ENCODE measurements at regions of chr10 and their contacts with region 1.

Region 1: GRCh38 chr10:70404036-70404786 is at the start of gene EIF4EBP2:
- DNase-seq: peak; percentile 99
- H3K4me3 Mint-ChIP-seq: peak within 1 kb of the TSS; percentile 99
- H3K27ac Mint-ChIP-seq: peak within 1 kb of the TSS; percentile 96
- H3K4me1 Mint-ChIP-seq: peaks cover 35% of the 10 kb centered on the region
- H3K27me3 Mint-ChIP-seq: peaks cover 4% of the 10 kb centered on the region

Region 2: DNA sequence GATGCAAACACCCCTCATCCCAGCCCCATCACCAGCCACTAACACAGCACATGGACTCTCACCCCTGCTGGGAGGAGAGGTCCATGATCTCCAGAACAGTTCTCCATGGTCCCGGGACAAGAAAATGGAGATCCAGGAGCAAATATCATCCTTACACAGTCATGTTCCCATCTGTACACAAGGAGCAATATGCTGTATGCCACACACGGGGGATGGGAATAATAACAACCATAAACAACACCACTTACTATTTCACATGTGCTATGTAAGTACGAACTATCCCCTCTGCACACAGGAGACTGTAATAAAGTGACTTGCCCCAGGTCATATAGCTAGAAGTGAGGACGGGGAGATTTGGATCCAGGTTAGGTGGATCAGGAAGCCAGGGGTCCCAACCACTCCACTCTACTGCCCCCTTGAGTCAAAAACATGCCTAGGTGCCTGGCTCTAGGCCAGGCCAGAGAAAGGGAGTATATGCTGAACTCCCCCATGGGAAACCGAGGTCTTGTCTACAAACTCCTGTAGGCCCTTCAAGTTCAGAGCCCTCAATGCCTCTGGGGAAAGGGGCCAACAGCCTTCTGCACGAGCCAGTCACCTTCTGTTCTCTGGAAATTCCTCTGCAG is 55.9 kb before region 1 on chr10:
- CTCF ChIA-PET with region 1: no interaction called
- DNase-seq: peak; percentile 39
- H3K4me3 Mint-ChIP-seq: no peak overlapping the region
- H3K27ac Mint-ChIP-seq: no peak overlapping the region
- H3K4me1 Mint-ChIP-seq: no peaks in the 10 kb centered on the region
- H3K27me3 Mint-ChIP-seq: no peaks in the 10 kb centered on the region

Region 3: GRCh38 chr10:70381471-70382421 is 22.5 kb before region 1 on chr10:
- CTCF ChIA-PET with region 1: interaction called, 15 read pairs
- DNase-seq: peak; percentile 67
- H3K4me3 Mint-ChIP-seq: peak overlapping the region; percentile 84
- H3K27ac Mint-ChIP-seq: peak overlapping the region; percentile 80
- H3K4me1 Mint-ChIP-seq: peaks cover 19% of the 10 kb centered on the region
- H3K27me3 Mint-ChIP-seq: peaks cover 16% of the 10 kb centered on the region

Region 4: DNA sequence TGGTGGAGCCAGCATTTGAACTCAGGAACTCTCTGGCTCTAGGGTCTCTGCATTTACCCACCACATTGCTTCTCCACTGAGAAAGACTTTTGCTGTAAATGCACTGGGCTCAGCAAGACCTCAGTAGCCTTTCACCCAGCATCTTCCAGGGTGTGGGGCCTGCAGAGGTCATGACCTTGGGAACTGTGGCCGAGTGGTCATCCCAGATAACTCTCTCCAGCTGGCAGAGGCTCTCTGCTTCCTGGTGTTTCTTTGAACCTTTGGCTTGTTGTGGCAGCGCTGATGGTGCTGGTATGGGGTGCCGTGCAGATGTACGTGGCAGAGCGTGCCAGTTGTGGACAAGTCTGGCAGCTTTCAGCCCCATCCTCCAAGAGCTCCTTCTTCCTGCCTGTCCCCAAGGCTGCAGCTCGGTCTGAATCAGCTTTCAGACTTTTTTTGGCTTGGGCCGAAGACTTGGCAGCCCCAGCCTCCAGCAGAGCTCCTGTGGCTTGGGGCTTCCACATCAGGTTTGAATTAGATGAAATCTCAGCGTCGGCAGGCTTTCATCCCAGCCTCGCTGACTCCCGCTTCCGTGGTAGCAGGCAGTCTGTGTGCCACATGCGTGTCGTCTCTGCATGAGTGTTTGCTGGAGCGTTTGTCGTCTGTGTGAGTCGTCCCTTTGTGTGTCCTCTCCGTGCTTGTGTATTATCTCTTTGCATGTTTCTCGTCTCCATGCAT is 289.6 kb after region 1 on chr10:
- CTCF ChIA-PET with region 1: no interaction called
- DNase-seq: no peak
- H3K4me3 Mint-ChIP-seq: no peak overlapping the region
- H3K27ac Mint-ChIP-seq: no peak overlapping the region
- H3K4me1 Mint-ChIP-seq: no peaks in the 10 kb centered on the region
- H3K27me3 Mint-ChIP-seq: peaks cover 11% of the 10 kb centered on the region

Measured in activated naive CD4-positive, alpha-beta T cell treated with anti-CD3 and anti-CD28 coated beads, Interleukin-2, amount 10 ng/mL, durations not matched to agents 7 days and 5 days (primary cell).